ENCODE measurements at regions of chr16 and their contacts with region 1.

Region 1: DNA sequence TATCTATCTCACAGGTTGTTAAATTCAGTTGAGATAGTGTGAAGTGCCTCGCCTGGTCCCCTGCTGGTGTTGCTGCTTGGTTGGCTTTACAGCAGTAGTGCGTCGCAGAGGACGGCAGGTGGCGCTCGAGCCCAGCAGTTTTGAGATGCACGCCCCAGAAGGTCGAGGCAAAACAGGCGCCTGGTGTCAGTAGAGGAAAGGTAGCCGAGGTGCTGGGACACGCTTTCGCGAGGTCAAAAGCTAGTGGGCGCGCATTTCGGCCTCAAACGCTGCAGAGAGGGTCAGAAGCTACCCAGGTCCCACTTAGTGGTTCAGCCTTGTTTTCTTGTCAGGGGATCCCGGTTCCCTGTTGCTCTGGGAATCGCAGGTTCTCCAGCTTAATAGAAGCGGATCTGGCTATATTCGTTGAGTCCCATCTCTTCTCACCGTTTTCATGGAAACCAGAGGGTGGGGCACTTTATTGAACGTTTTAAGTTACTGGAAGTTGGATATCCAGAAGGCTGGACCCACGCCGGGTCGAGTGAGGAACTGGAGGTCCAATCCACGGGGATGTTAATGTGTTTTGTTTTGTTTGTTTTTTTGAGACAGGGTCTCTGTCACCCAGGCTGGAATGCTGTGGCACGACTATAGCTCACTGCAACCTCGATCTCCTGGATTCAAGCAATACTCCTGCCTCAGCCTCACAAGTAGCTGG is 10.3 kb upstream of the ZFP90 start:
- DNase-seq: peak; percentile 75
- ATAC-seq: peak; percentile 92
- H3K4me3 ChIP-seq: no peak overlapping the region
- H3K27ac ChIP-seq: no peak overlapping the region
- H3K4me1 ChIP-seq: peaks cover 10 to 23% of the 10 kb centered on the region in 2 experiments
- H3K27me3 ChIP-seq: no peaks in the 10 kb centered on the region
- CTCF ChIP-seq: peak; percentile 66 to 98 (median 86)
- POLR2A ChIP-seq: no peak
- RAD21 ChIP-seq: peak; percentile 98

Region 2: GRCh38 chr16:68800257-68800875 is 271.5 kb after region 1 on chr16:
- CTCF ChIA-PET with region 1: interaction called, 3 read pairs
- POLR2A ChIA-PET with region 1: no interaction called
- RAD21 ChIA-PET with region 1: no interaction called
- intact Hi-C with region 1: loop called (anchors 2 kb)
- DNase-seq: peak; percentile 62
- ATAC-seq: peak; percentile 95
- H3K4me3 ChIP-seq: no peak overlapping the region
- H3K27ac ChIP-seq: no peak overlapping the region
- H3K4me1 ChIP-seq: peaks cover 17 to 24% of the 10 kb centered on the region in 2 experiments
- H3K27me3 ChIP-seq: no peaks in the 10 kb centered on the region
- CTCF ChIP-seq: peak; percentile 87 to 90 (median 88)
- POLR2A ChIP-seq: no peak
- RAD21 ChIP-seq: peak; percentile 91

Region 3: GRCh38 chr16:68843482-68844210 is 314.8 kb after region 1 on chr16 and contains the start of gene TANGO6:
- CTCF ChIA-PET with region 1: interaction called, 5 read pairs
- POLR2A ChIA-PET with region 1: no interaction called
- RAD21 ChIA-PET with region 1: no interaction called
- intact Hi-C with region 1: loop called (anchors 5 kb)
- DNase-seq: peak; percentile 47
- ATAC-seq: peak; percentile 87
- H3K4me3 ChIP-seq: peak within 1 kb of the TSS; percentile 88 to 97
- H3K27ac ChIP-seq: peak within 1 kb of the TSS; percentile 67
- H3K4me1 ChIP-seq: peaks cover 2 to 12% of the 10 kb centered on the region in 2 experiments; a peak in 3 of 4 replicates
- H3K27me3 ChIP-seq: no peaks in the 10 kb centered on the region
- CTCF ChIP-seq: peak; percentile 18 to 39 (median 35); a peak in 4 of 6 replicates
- POLR2A ChIP-seq: peak; percentile 94
- RAD21 ChIP-seq: peak; percentile 38; the same call in 1 of the 2 replicates
- total RNA-seq, gene TANGO6: 16.4 TPM